ENCODE measurements at regions of chr14 and their contacts with region 1.

Region 1: DNA sequence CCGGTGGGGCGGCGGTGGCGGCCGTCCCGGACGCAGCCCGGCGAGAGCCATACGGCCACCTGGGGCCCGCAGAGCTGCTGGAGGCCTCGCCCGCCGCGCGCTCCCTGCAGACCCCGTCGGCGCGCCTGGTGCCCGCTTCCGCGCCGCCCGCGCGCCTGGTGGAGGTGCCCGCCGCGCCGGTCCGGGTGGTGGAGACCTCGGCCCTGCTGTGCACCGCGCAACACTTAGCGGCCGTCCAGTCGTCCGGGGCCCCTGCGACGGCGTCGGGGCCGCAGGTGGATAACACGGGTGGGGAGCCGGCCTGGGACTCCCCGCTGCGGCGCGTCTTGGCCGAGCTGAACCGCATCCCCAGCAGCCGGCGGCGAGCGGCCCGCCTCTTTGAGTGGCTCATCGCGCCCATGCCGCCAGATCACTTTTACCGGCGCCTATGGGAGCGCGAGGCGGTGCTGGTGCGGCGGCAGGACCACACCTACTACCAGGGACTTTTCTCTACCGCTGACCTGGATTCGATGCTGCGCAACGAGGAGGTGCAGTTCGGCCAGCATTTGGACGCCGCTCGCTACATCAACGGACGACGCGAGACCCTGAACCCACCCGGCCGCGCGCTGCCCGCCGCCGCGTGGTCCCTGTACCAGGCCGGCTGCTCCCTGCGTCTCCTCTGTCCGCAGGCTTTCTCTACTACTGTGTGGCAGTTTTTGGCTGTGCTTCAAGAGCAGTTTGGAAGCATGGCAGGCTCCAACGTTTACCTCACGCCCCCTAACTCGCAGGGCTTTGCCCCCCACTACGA is 716 bp downstream of the RIOX1 start:
- DNase-seq: peak; percentile 27 to 32
- ATAC-seq: peak; percentile 64 to 73
- H3K4me3 ChIP-seq: peak overlapping the region; percentile 72 to 81 (median 74)
- H3K27ac ChIP-seq: peak overlapping the region; percentile 80 to 88 (median 82)
- H3K4me1 ChIP-seq: peaks cover 20 to 29% of the 10 kb centered on the region in 2 donors
- H3K27me3 ChIP-seq: no peaks in the 10 kb centered on the region
- CTCF ChIP-seq: peak in 2 of 5 experiments; percentile 4 to 23
- POLR2A ChIP-seq: peak in 1 of 2 donors; percentile 7

Region 2: GRCh38 chr14:73458151-73458976 is 33.1 kb before region 1 on chr14 and contains the start of gene NUMB:
- in situ Hi-C with region 1: no loop called
- intact Hi-C with region 1: loop called (anchors 1 kb)
- DNase-seq: peak; percentile 99
- ATAC-seq: peak; percentile 98 to 99
- H3K4me3 ChIP-seq: peak within 1 kb of the TSS; percentile 78 to 94 (median 90)
- H3K27ac ChIP-seq: peak within 1 kb of the TSS; percentile 90 to 94 (median 92)
- H3K4me1 ChIP-seq: peaks cover 50 to 71% of the 10 kb centered on the region in 2 donors
- H3K27me3 ChIP-seq: no peaks in the 10 kb centered on the region
- CTCF ChIP-seq: peak in 3 of 5 experiments; percentile 12 to 27 (median 15)
- POLR2A ChIP-seq: peak; percentile 78 to 85
- total RNA-seq, gene NUMB: 14.3 to 29.8 (median 23.6) TPM

Region 3: GRCh38 chr14:73633116-73634010 is 141.9 kb after region 1 on chr14:
- in situ Hi-C with region 1: no loop called
- intact Hi-C with region 1: loop called (anchors 5 kb)
- DNase-seq: peak; percentile 24 to 65
- ATAC-seq: peak; percentile 81 to 82
- H3K4me3 ChIP-seq: peak overlapping the region; percentile 69 to 80 (median 71)
- H3K27ac ChIP-seq: peak overlapping the region; percentile 80 to 83 (median 82)
- H3K4me1 ChIP-seq: peaks cover 5 to 11% of the 10 kb centered on the region in 2 donors
- H3K27me3 ChIP-seq: no peaks in the 10 kb centered on the region
- CTCF ChIP-seq: peak; percentile 86 to 94 (median 88)
- POLR2A ChIP-seq: no peak